Heart right ventricle (tissue), 16 donors: ENCODE measurements at regions of chr1 and their contacts with region 1.

Region 1: GRCh38 chr1:26066857-26067256 is 573 bp downstream of the TRIM63 start:
- DNase-seq: peak; percentile 76 to 84
- ATAC-seq: peak; percentile 83 to 92 (median 90)
- H3K4me3 ChIP-seq: peak overlapping the region; percentile 48 to 69 (median 60)
- H3K27ac ChIP-seq: peak overlapping the region; percentile 81 to 99 (median 90)
- H3K4me1 ChIP-seq: peaks cover 0 to 10% (median 3%) of the 10 kb centered on the region in 9 donors
- H3K27me3 ChIP-seq: peaks cover 0 to 20% (median 6%) of the 10 kb centered on the region in 7 donors
- CTCF ChIP-seq: no peak

Region 2: GRCh38 chr1:26083246-26083645 is 16.4 kb after region 1 on chr1:
- intact Hi-C with region 1: loop called in 1 of 10 experiments (anchors 2 kb)
- DNase-seq: peak in 1 of 2 donors; percentile 55
- ATAC-seq: peak; percentile 73 to 90 (median 86)
- H3K4me3 ChIP-seq: no peak overlapping the region
- H3K27ac ChIP-seq: peak overlapping the region; percentile 64 to 93 (median 79)
- H3K4me1 ChIP-seq: peaks cover 0 to 43% (median 11%) of the 10 kb centered on the region in 9 donors
- H3K27me3 ChIP-seq: peaks cover 0 to 7% (median 0%) of the 10 kb centered on the region in 7 donors
- CTCF ChIP-seq: no peak

Region 3: DNA sequence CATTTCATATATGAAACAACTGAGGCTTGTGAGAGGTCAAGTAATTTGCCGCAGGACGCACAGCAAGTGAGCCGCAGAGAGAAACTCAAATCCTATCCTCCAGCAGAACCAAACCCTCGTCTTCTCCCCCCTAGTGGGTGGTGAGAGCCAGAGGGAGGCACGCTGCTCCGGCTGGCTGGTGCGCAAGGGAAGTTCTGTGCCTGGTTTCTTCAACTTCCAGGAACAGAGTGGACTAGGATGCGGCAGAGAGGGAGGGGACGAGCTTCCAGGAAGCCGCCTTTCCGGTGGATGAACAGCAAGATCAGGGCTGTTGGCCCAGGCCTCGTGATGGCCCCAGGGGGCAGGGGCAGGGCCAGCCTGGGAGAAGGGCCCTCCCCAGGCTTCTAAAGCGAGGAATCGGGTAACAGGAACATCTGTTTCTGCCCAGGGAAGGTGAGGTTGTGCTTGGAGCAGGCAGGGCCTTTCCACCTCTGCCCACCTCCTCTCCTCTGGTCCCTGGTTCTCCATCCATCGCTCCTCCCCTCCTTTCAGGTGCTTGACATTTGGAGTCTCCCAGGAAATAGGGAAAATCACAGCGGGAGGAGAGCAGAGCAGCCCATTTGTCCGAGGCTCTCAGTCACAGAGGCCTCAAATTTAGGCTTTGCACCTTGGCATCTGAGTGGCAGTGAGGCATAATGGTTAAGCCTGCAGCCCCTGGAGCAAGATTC is 28.0 kb after region 1 on chr1:
- intact Hi-C with region 1: loop called in 4 of 10 experiments (anchors 1 to 2 kb)
- DNase-seq: peak; percentile 45 to 52
- ATAC-seq: peak; percentile 43 to 88 (median 72)
- H3K4me3 ChIP-seq: peak overlapping the region in 5 of 10 donors; percentile 21 to 33 (median 21)
- H3K27ac ChIP-seq: peak overlapping the region; percentile 31 to 92 (median 87)
- H3K4me1 ChIP-seq: peaks cover 0 to 22% (median 18%) of the 10 kb centered on the region in 9 donors
- H3K27me3 ChIP-seq: peaks cover 0 to 14% (median 0%) of the 10 kb centered on the region in 7 donors
- CTCF ChIP-seq: peak in 3 of 9 donors; percentile 26 to 39 (median 32)